ENCODE measurements at regions of chr19 and their contacts with region 1.

Region 1: GRCh38 chr19:10870955-10871603 is at the start of gene CARM1:
- DNase-seq: peak; percentile 99 to 100 (median 99)
- H3K4me3 ChIP-seq: peak within 1 kb of the TSS; percentile 47 to 55
- H3K4me3 Mint-ChIP-seq: peak within 1 kb of the TSS; percentile 81 to 94 (median 86)
- H3K27ac ChIP-seq: peak within 1 kb of the TSS; percentile 55
- H3K27ac Mint-ChIP-seq: peak within 1 kb of the TSS; percentile 76 to 96 (median 92)
- H3K4me1 ChIP-seq: peaks cover 20% of the 10 kb centered on the region
- H3K4me1 Mint-ChIP-seq: peaks cover 8 to 24% (median 16%) of the 10 kb centered on the region in 4 donors
- H3K27me3 ChIP-seq: no peaks in the 10 kb centered on the region
- H3K27me3 Mint-ChIP-seq: no peaks in the 10 kb centered on the region
- total RNA-seq, gene CARM1: 25.2 to 26.5 TPM

Region 2: DNA sequence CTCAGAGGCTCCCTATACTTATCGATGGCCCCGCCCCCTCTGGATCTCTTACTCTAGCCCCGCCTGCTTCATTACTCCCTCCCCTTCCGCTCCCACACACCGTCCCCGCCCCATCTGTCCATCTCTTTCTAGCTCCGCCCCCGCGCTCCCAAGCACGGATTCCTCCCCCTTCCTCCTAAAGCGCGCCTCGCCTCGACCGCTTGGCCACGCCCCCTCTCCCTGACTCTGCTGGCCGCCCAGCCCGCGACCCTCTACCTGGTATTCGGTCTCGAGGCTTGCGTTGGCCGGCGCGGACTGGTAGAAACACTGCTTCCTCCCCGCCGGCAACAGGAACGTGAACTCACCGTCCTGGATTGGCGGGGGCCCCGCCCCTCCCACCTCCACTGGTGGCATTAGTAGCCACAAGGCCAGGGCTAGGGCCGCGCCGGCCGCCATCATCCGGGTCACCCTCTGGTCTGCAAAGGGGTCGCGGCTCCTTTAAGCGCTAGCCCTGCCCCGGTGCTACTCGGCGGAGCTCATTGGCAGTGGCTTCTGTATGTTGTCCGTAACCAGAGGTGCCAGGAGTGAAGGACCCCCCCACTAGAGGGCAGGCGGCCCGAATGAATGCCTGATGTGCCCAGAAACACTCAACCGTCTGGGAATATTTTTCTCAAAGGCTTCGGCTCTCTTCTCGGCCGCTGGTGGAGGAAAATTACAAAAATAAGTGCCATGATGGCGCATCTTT is 35.2 kb before region 1 on chr19 and contains the start of gene TMED1:
- CTCF ChIA-PET with region 1: interaction called, 67 read pairs
- POLR2A ChIA-PET with region 1: interaction called, 11 read pairs
- intact Hi-C with region 1: loop called (anchors 1 kb)
- DNase-seq: peak; percentile 94 to 95 (median 94)
- H3K4me3 ChIP-seq: peak within 1 kb of the TSS; percentile 64 to 89
- H3K4me3 Mint-ChIP-seq: peak within 1 kb of the TSS; percentile 96 to 100 (median 98)
- H3K27ac ChIP-seq: peak within 1 kb of the TSS; percentile 95
- H3K27ac Mint-ChIP-seq: peak within 1 kb of the TSS; percentile 99 to 100 (median 100)
- H3K4me1 ChIP-seq: peaks cover 17% of the 10 kb centered on the region
- H3K4me1 Mint-ChIP-seq: peaks cover 9 to 21% (median 13%) of the 10 kb centered on the region in 4 donors
- H3K27me3 ChIP-seq: no peaks in the 10 kb centered on the region
- H3K27me3 Mint-ChIP-seq: no peaks in the 10 kb centered on the region
- total RNA-seq, gene TMED1: 9.0 to 10.9 TPM

Region 3: GRCh38 chr19:10899151-10899653 is 28.1 kb after region 1 on chr19:
- CTCF ChIA-PET with region 1: no interaction called
- POLR2A ChIA-PET with region 1: no interaction called
- intact Hi-C with region 1: no loop called
- DNase-seq: no peak
- H3K4me3 ChIP-seq: no peak overlapping the region
- H3K4me3 Mint-ChIP-seq: no peak overlapping the region
- H3K27ac ChIP-seq: no peak overlapping the region
- H3K27ac Mint-ChIP-seq: peak overlapping the region in 1 of 7 donors; percentile 13
- H3K4me1 ChIP-seq: peaks cover 10% of the 10 kb centered on the region
- H3K4me1 Mint-ChIP-seq: peaks cover 8 to 16% (median 9%) of the 10 kb centered on the region in 4 donors
- H3K27me3 ChIP-seq: no peaks in the 10 kb centered on the region
- H3K27me3 Mint-ChIP-seq: no peaks in the 10 kb centered on the region

Region 4: GRCh38 chr19:10928525-10929401 is 57.7 kb after region 1 on chr19 and contains the starts of genes TIMM29 and YIPF2:
- CTCF ChIA-PET with region 1: interaction called, 4 read pairs
- POLR2A ChIA-PET with region 1: interaction called, 4 read pairs
- intact Hi-C with region 1: loop called (anchors 1 kb)
- DNase-seq: peak; percentile 89 to 95 (median 90)
- H3K4me3 ChIP-seq: peak within 1 kb of the TSS; percentile 52 to 80
- H3K4me3 Mint-ChIP-seq: peak within 1 kb of the TSS; percentile 88 to 96 (median 90)
- H3K27ac ChIP-seq: peak within 1 kb of the TSS; percentile 57
- H3K27ac Mint-ChIP-seq: peak within 1 kb of the TSS; percentile 88 to 95 (median 90)
- H3K4me1 ChIP-seq: peaks cover 28% of the 10 kb centered on the region
- H3K4me1 Mint-ChIP-seq: peaks cover 8 to 38% (median 19%) of the 10 kb centered on the region in 4 donors
- H3K27me3 ChIP-seq: no peaks in the 10 kb centered on the region
- H3K27me3 Mint-ChIP-seq: no peaks in the 10 kb centered on the region
- total RNA-seq, gene TIMM29: 39.6 to 40.9 TPM
- total RNA-seq, gene YIPF2: 29.6 TPM

Measured in CD4-positive, alpha-beta memory T cell (primary cell).